GM10248 (cell line): ENCODE measurements at regions of chr10 and their contacts with region 1.

Region 1: DNA sequence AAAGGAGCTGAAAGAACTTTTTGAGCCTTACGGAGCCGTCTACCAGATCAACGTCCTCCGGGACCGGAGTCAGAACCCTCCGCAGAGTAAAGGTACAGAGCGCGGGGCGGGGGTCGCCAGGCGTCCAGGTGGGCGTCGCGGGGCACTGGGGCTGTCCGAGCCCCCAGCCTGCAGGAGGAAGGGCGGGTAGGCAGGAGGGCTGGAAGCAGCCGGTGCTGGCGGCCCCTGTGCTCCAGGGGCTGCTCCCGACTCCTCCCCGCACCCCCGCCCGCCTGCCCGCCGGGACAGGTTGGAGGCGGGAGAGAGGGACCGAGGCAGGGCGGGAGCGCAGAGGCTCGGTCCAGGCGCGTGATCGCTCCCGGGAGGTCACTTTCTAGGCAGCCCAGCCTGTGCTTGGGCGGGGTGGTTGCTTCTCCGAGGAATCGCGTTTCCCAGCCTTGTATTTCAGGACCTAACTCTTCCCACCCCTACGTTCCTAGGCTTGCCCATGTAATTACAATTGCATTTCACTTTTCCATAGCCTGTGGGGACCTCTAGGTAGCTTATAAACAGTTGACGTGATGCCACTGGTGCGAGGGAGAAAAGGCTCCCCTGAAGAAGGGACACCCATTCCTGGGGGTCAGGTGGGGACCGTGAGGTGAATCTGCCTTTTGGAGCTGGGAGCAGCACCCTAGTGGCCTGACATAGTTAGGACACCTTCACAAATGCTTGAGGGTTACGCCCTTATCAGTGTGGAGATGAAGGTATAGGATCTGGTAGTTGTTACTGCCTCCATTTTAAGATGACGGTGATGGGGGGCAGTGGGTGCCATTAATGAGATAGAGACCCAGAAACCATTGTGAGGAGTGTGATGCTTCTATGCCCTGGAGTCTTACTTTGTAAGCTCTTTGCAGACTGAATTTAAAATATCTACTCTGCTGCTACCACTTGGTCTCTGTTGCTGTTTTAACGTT is 148.2 kb downstream of the CELF2 start:
- DNase-seq: peak; percentile 72
- CTCF ChIP-seq: peak; percentile 56

Region 2: DNA sequence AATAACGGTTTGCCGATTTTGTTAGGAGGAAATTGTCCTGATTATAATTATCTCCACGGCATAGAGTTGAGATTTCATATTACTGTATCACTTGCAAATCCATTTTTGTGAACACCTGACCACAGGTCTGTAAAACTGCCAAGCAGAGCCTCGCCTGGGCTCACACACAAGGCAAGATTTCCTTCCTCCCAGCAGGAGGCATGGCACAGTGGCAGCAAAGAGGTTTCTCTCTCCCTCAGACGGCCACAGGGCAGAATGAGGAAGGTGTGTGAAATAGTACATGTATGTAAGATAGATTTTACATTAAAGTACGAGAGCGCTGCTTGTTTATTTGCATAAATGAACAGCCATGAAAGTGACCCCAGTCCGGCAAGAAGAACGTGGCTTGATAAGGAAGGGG is 18.1 kb before region 1 on chr10:
- CTCF ChIA-PET with region 1: interaction called, 34 read pairs
- POLR2A ChIA-PET with region 1: interaction called, 4 read pairs
- DNase-seq: no peak
- CTCF ChIP-seq: no peak

Region 3: DNA sequence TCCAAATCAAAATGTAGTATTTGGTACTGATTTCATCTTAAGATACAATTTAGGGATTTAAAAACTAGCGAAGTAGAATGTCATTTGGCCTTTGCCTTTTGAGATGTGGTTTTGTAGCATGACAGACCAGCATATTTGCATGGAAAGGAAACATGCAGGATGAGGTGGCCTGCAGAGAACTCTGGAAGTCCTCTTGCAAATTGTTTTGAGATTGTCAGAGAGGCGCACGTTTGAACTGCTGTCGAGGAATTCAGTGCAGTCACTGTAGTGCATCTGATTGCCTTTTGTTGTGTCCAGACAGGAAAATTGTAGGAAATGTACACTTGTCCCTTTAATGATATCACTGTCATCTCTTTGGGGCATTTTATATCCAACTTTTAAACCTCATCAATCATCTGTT is 11.5 kb before region 1 on chr10:
- CTCF ChIA-PET with region 1: interaction called, 34 read pairs
- POLR2A ChIA-PET with region 1: interaction called, 4 read pairs
- DNase-seq: no peak
- CTCF ChIP-seq: no peak

Region 4: DNA sequence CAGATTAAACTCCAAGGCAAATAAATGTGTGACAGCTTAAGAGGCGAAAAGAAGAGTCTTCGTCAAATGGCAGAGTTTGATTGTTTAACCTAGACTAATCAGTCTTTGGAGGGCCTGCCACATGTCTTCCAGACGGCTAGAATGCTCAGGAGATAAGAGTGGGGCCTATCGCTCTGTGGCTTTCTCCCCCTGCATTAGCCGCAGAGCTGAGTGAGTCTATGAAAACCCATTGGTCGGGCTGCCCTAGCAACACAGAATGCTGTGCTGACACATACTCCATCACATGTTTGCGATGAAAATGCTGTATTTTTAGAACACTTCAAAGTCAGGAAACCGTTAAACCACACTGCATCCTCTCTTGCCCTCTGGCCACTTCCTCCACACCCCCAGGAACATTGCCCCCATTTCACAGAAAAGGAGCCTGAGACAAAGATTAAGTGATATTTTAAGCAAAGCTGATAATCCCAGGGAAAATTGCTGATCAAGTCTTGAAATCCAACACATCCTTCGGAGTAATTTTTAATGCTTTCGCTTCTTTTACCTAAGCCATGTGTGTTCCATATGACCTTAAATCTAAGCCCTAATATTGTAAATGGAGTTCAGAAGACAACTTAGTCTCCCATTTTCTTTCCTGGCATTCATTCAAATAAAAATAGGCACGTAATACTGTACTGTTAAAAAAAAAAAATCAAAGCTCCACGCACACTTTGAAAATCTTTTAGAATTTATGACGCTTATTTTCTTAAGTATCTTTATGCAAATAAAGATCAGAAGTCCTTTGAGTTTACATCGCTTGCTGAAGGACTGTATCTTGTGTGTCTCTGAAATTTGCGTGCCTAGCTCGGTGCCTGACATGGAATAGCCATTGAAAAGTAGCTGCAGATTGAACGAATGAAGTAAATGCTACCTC is 13.0 kb after region 1 on chr10:
- CTCF ChIA-PET with region 1: interaction called, 40 read pairs
- POLR2A ChIA-PET with region 1: interaction called, 4 read pairs
- DNase-seq: peak; percentile 79
- CTCF ChIP-seq: no peak